CD8-positive, alpha-beta T cell (primary cell): ENCODE measurements at regions of chr5 and their contacts with region 1.

Region 1: GRCh38 chr5:138178516-138179276 is at the starts of genes BRD8 and KIF20A:
- DNase-seq: peak; percentile 74 to 94 (median 88)
- ATAC-seq: peak; percentile 88
- H3K4me3 ChIP-seq: peak within 1 kb of the TSS; percentile 67 to 92
- H3K4me3 Mint-ChIP-seq: peak within 1 kb of the TSS; percentile 46
- H3K27ac ChIP-seq: peak within 1 kb of the TSS; percentile 42 to 77
- H3K27ac Mint-ChIP-seq: no peak within 1 kb of the TSS
- H3K4me1 ChIP-seq: peaks cover 15% of the 10 kb centered on the region
- H3K4me1 Mint-ChIP-seq: peaks cover 10% of the 10 kb centered on the region
- H3K27me3 ChIP-seq: no peaks in the 10 kb centered on the region
- H3K27me3 Mint-ChIP-seq: no peaks in the 10 kb centered on the region
- CTCF ChIP-seq: no peak
- total RNA-seq, gene BRD8: 13.0 to 15.0 TPM
- total RNA-seq, gene KIF20A: 0.19 TPM in 1 of 2 experiments, not detected in the other

Region 2: GRCh38 chr5:138213161-138214029 is 34.7 kb after region 1 on chr5 and contains the start of gene CDC23:
- CTCF ChIA-PET with region 1: interaction called, 3 read pairs
- POLR2A ChIA-PET with region 1: no interaction called
- intact Hi-C with region 1: loop called (anchors 1 kb)
- DNase-seq: peak; percentile 76 to 97 (median 89)
- ATAC-seq: peak; percentile 97
- H3K4me3 ChIP-seq: peak within 1 kb of the TSS; percentile 91 to 93
- H3K4me3 Mint-ChIP-seq: peak within 1 kb of the TSS; percentile 100
- H3K27ac ChIP-seq: peak within 1 kb of the TSS; percentile 81 to 86
- H3K27ac Mint-ChIP-seq: peak within 1 kb of the TSS; percentile 98
- H3K4me1 ChIP-seq: peaks cover 18% of the 10 kb centered on the region
- H3K4me1 Mint-ChIP-seq: peaks cover 21% of the 10 kb centered on the region
- H3K27me3 ChIP-seq: no peaks in the 10 kb centered on the region
- H3K27me3 Mint-ChIP-seq: peaks cover 2% of the 10 kb centered on the region
- CTCF ChIP-seq: no peak
- total RNA-seq, gene CDC23: 18.2 to 20.5 TPM

Region 3: GRCh38 chr5:138337685-138338410 is 159.2 kb after region 1 on chr5 and contains the start of gene FAM53C:
- CTCF ChIA-PET with region 1: interaction called, 3 read pairs
- POLR2A ChIA-PET with region 1: interaction called, 12 read pairs
- intact Hi-C with region 1: loop called in 1 of 2 experiments (anchors 1 kb)
- DNase-seq: peak; percentile 88 to 98 (median 91)
- ATAC-seq: peak; percentile 84
- H3K4me3 ChIP-seq: peak within 1 kb of the TSS; percentile 69 to 85
- H3K4me3 Mint-ChIP-seq: peak within 1 kb of the TSS; percentile 93
- H3K27ac ChIP-seq: peak within 1 kb of the TSS; percentile 95 to 99
- H3K27ac Mint-ChIP-seq: peak within 1 kb of the TSS; percentile 100
- H3K4me1 ChIP-seq: peaks cover 23% of the 10 kb centered on the region
- H3K4me1 Mint-ChIP-seq: peaks cover 41% of the 10 kb centered on the region
- H3K27me3 ChIP-seq: no peaks in the 10 kb centered on the region
- H3K27me3 Mint-ChIP-seq: no peaks in the 10 kb centered on the region
- CTCF ChIP-seq: no peak
- total RNA-seq, gene FAM53C: 99.8 to 99.9 TPM

Region 4: GRCh38 chr5:138408023-138408422 is 229.3 kb after region 1 on chr5:
- CTCF ChIA-PET with region 1: interaction called, 5 read pairs
- POLR2A ChIA-PET with region 1: no interaction called
- intact Hi-C with region 1: loop called in 1 of 2 experiments (anchors 2 kb)
- DNase-seq: peak in 2 of 9 experiments; percentile 18 to 40
- ATAC-seq: peak; percentile 72
- H3K4me3 ChIP-seq: no peak overlapping the region
- H3K4me3 Mint-ChIP-seq: no peak overlapping the region
- H3K27ac ChIP-seq: no peak overlapping the region
- H3K27ac Mint-ChIP-seq: peak overlapping the region; percentile 34
- H3K4me1 ChIP-seq: no peaks in the 10 kb centered on the region
- H3K4me1 Mint-ChIP-seq: peaks cover 10% of the 10 kb centered on the region
- H3K27me3 ChIP-seq: no peaks in the 10 kb centered on the region
- H3K27me3 Mint-ChIP-seq: no peaks in the 10 kb centered on the region
- CTCF ChIP-seq: no peak

Region 5: DNA sequence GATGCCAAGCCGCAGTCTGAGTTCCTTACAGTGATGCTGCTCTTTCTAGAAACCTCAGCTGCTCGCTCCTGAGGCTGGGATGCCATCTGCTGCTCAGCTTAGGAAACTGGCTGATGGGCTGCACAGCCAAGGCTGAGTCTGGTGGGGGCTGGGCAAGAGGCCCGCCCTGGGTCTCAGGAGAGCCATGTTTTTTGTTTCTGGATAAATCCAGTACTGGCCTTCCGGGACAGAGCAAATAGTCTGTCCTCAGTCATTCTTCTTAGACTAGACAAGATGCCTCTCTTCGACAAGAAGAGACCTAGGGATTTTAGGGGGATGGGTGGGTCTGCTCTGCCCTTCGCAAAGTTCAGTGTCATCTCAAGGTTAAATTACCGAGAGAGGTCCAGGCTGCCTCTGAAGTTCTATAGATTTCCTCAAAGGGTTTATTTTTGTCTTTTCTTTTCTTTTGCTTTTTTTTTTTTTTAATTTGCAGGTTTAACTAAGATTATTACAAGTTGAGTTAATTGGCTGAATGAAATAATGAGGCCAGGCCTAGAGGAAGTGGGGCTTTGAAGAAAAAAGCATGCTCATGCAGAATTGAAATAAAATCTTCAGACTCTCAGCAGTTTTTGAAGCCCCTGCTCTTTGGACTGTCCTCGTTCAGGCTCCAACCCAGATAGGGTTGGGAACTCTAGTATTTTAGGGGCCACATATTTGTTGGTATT is 1084.2 kb after region 1 on chr5:
- CTCF ChIA-PET with region 1: no interaction called
- POLR2A ChIA-PET with region 1: no interaction called
- intact Hi-C with region 1: loop called in 1 of 2 experiments (anchors 10 kb)
- DNase-seq: peak; percentile 37 to 80 (median 65)
- ATAC-seq: peak; percentile 99
- H3K4me3 ChIP-seq: no peak overlapping the region
- H3K4me3 Mint-ChIP-seq: no peak overlapping the region
- H3K27ac ChIP-seq: no peak overlapping the region
- H3K27ac Mint-ChIP-seq: no peak overlapping the region
- H3K4me1 ChIP-seq: peaks cover 13% of the 10 kb centered on the region
- H3K4me1 Mint-ChIP-seq: peaks cover 15% of the 10 kb centered on the region
- H3K27me3 ChIP-seq: no peaks in the 10 kb centered on the region
- H3K27me3 Mint-ChIP-seq: peaks cover 3% of the 10 kb centered on the region
- CTCF ChIP-seq: peak; percentile 56